ENCODE measurements at regions of chr20 and their contacts with region 1.

Region 1: DNA sequence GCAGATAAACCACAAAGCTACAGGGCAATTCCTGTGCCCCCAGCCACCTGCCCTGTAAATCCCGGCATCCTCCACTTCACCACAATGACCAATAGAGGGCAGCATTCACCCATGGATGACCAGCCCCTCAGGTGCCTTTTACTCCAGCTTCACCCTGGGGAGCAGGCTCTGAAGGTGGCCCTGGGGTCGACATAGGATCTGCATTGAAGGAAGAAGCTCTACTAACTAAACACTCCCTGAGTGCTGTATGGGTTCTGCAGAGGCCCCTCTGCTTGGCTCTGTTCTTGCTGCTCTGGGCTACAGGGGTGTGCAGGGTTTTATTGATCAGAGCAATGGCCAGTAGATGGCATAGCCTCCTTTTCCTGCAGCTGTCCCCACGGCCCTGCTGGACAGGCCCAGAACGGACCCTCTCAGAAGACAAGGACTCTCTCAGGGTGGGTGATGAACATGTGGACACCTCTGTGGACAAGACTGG is 20.3 kb downstream of the CST4 start:
- DNase-seq: peak; percentile 72
- ATAC-seq: peak; percentile 91
- H3K4me3 Mint-ChIP-seq: no peak overlapping the region
- H3K27ac Mint-ChIP-seq: no peak overlapping the region
- H3K4me1 Mint-ChIP-seq: no peaks in the 10 kb centered on the region
- H3K27me3 Mint-ChIP-seq: peaks cover 3% of the 10 kb centered on the region; the same call in 1 of the 2 replicates
- CTCF ChIP-seq: peak; percentile 85

Region 2: DNA sequence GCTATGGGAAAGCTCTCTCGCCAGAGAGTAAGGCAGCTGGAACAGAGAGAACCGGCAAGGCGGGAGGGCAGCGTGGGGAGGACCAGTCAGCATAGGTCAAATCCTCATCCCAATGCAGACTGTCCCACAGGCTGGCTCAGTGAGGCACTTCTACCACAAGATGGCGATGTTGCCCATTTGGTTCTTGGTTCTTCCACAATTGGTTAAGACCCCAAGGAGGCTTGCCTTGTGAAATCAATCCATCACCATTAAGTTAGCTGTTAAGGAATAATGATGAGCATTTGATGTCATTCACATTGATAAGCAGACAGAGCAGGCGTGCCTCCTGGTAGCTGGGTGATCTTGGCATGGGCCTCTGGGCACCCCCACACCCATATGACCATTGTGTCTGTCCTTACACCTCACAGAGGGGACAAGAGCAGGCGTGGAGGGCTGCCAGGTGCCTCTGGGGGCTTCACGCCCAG is 226.6 kb before region 1 on chr20:
- CTCF ChIA-PET with region 1: interaction called, 16 read pairs
- POLR2A ChIA-PET with region 1: no interaction called
- DNase-seq: peak; percentile 89
- ATAC-seq: peak; percentile 97
- H3K4me3 Mint-ChIP-seq: no peak overlapping the region
- H3K27ac Mint-ChIP-seq: no peak overlapping the region
- H3K4me1 Mint-ChIP-seq: 0 out of 2 replicates have a peak, but pooled peaks cover 7% of the 10 kb centered on the region
- H3K27me3 Mint-ChIP-seq: peaks cover 4% of the 10 kb centered on the region; the same call in 1 of the 2 replicates
- CTCF ChIP-seq: peak; percentile 80

Region 3: GRCh38 chr20:23596579-23597250 is 71.8 kb before region 1 on chr20:
- CTCF ChIA-PET with region 1: no interaction called
- POLR2A ChIA-PET with region 1: no interaction called
- DNase-seq: no peak
- ATAC-seq: no peak
- H3K4me3 Mint-ChIP-seq: no peak overlapping the region
- H3K27ac Mint-ChIP-seq: no peak overlapping the region
- H3K4me1 Mint-ChIP-seq: peaks cover 29% of the 10 kb centered on the region
- H3K27me3 Mint-ChIP-seq: no peaks in the 10 kb centered on the region; the same call in 1 of the 2 replicates
- CTCF ChIP-seq: no peak

Region 4: GRCh38 chr20:23622839-23623343 is 45.6 kb before region 1 on chr20:
- CTCF ChIA-PET with region 1: no interaction called
- POLR2A ChIA-PET with region 1: no interaction called
- DNase-seq: no peak
- ATAC-seq: 0 out of 2 replicates have a peak, but pooled peaks have one; percentile 47
- H3K4me3 Mint-ChIP-seq: no peak overlapping the region
- H3K27ac Mint-ChIP-seq: no peak overlapping the region
- H3K4me1 Mint-ChIP-seq: peaks cover 27% of the 10 kb centered on the region
- H3K27me3 Mint-ChIP-seq: peaks cover 7% of the 10 kb centered on the region
- CTCF ChIP-seq: no peak

Region 5: GRCh38 chr20:23655491-23656211 is 12.9 kb before region 1 on chr20:
- CTCF ChIA-PET with region 1: interaction called, 13 read pairs
- POLR2A ChIA-PET with region 1: no interaction called
- DNase-seq: no peak
- ATAC-seq: peak; percentile 30
- H3K4me3 Mint-ChIP-seq: no peak overlapping the region
- H3K27ac Mint-ChIP-seq: no peak overlapping the region
- H3K4me1 Mint-ChIP-seq: peaks cover 12% of the 10 kb centered on the region
- H3K27me3 Mint-ChIP-seq: peaks cover 4% of the 10 kb centered on the region; the same call in 1 of the 2 replicates
- CTCF ChIP-seq: no peak

Region 6: DNA sequence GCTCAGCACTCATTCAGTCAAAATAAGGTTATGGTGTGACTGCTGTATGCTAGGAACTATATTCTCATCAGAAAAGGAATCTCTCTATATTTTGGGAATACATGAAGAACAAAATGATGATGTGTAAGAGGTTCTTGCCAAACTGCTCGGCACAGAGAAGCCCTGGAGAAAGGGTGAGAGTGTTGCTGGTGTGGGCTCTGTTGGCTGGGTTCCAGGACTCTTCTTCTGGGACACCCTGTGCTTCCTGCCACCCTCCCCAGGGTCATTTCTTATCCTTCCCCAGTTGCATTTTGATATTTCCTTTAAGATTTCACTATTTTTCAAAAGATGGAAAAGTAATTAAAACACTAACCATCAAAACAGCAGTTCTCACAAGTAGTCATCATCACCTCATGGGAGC is 53.4 kb after region 1 on chr20:
- CTCF ChIA-PET with region 1: interaction called, 19 read pairs
- POLR2A ChIA-PET with region 1: no interaction called
- DNase-seq: no peak
- ATAC-seq: no peak
- H3K4me3 Mint-ChIP-seq: no peak overlapping the region
- H3K27ac Mint-ChIP-seq: no peak overlapping the region
- H3K4me1 Mint-ChIP-seq: peaks cover 8% of the 10 kb centered on the region
- H3K27me3 Mint-ChIP-seq: peaks cover 11% of the 10 kb centered on the region
- CTCF ChIP-seq: no peak

Region 7: DNA sequence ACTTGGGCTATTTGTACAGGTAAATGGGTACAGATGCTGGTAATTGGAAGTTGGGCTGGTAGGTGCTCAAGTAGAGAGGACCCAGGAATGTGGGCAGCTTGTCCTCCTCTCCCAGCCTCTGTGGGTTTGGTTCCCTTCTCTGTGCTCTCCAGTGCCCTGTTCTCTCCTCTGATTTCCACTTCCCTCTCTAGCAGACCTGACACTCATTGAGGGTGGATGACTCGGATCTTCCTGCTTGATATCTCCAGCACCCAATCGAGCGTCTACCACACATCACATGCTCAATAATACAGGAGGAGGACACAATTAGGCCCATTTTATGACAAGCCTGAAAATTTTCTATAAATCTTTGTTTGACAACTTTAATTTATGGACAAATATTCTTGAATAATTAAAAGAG is 58.5 kb after region 1 on chr20:
- CTCF ChIA-PET with region 1: interaction called, 19 read pairs
- POLR2A ChIA-PET with region 1: no interaction called
- DNase-seq: no peak
- ATAC-seq: no peak
- H3K4me3 Mint-ChIP-seq: no peak overlapping the region
- H3K27ac Mint-ChIP-seq: no peak overlapping the region
- H3K4me1 Mint-ChIP-seq: peaks cover 8% of the 10 kb centered on the region
- H3K27me3 Mint-ChIP-seq: peaks cover 22% of the 10 kb centered on the region
- CTCF ChIP-seq: no peak

Region 8: DNA sequence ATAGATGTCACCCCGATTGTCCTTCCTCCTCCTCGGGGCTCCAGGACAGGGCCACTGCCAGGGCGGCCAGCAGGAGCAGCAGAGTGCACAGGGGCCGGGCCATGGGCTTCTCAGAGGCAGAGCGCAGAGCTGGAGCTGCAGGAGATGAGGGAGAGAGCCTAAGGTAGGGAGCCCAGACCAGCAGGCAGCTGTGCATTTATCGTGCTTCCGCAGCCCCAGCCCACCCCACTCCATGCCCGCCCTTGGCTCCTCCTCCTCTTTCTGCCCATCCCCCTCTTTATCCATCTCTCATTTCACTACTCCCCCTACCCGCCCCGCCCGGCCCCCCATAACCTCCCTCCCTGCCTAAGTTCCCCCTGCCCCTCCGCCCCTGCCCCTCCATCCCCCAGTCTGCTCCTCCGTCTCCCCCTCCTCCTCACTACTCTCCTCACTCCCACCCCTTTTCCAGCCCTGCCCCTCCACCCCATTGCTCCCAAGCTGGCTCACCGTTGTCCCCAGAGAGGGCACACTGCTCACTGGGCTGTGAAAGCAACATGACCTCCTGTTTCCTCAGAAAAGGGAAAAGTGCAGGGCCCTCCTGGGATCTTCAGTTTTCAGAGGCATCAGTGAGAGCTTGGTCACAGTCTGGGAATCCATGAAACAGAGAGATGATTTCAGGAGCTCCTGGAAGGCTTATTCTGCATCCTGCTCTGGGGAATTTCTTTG is 107.7 kb after region 1 on chr20:
- CTCF ChIA-PET with region 1: interaction called, 19 read pairs
- POLR2A ChIA-PET with region 1: no interaction called
- DNase-seq: peak; percentile 54
- ATAC-seq: peak; percentile 93
- H3K4me3 Mint-ChIP-seq: no peak overlapping the region
- H3K27ac Mint-ChIP-seq: no peak overlapping the region
- H3K4me1 Mint-ChIP-seq: peaks cover 10% of the 10 kb centered on the region
- H3K27me3 Mint-ChIP-seq: peaks cover 45% of the 10 kb centered on the region
- CTCF ChIP-seq: no peak

Region 9: DNA sequence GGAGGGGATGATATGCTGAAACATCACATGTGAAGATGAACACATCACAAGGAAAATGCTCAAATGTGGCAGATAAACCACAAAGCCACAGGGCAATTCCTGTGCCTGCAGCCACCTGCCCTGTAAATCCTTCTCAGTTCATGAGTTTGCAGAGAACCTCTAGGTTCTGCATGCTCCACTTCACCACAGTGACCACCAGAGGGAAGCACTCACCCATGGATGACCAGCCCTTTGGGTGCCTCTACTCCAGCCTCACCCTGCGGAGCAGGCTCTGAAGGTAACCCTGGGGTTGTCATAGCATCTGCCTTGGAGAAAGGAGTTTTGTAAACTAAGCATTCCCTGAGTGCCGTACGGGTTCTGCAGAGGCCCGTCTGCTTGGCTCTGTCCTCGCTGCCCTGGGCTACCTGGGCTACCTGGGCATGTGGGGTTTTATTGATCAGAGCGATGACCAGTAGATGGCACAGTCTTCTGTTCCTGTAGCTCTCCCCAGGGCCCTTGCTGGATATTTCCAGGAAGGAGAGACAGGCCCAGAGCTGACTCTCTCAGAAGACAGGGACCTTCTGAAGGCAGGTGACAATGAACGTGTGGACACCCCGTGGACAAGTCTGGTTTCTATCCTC is 114.0 kb after region 1 on chr20:
- CTCF ChIA-PET with region 1: interaction called, 19 read pairs
- POLR2A ChIA-PET with region 1: no interaction called
- DNase-seq: no peak
- ATAC-seq: peak; percentile 98
- H3K4me3 Mint-ChIP-seq: no peak overlapping the region
- H3K27ac Mint-ChIP-seq: no peak overlapping the region
- H3K4me1 Mint-ChIP-seq: no peaks in the 10 kb centered on the region
- H3K27me3 Mint-ChIP-seq: peaks cover 2% of the 10 kb centered on the region; the same call in 1 of the 2 replicates
- CTCF ChIP-seq: peak; percentile 41; the same call in 1 of the 2 replicates

Region 10: DNA sequence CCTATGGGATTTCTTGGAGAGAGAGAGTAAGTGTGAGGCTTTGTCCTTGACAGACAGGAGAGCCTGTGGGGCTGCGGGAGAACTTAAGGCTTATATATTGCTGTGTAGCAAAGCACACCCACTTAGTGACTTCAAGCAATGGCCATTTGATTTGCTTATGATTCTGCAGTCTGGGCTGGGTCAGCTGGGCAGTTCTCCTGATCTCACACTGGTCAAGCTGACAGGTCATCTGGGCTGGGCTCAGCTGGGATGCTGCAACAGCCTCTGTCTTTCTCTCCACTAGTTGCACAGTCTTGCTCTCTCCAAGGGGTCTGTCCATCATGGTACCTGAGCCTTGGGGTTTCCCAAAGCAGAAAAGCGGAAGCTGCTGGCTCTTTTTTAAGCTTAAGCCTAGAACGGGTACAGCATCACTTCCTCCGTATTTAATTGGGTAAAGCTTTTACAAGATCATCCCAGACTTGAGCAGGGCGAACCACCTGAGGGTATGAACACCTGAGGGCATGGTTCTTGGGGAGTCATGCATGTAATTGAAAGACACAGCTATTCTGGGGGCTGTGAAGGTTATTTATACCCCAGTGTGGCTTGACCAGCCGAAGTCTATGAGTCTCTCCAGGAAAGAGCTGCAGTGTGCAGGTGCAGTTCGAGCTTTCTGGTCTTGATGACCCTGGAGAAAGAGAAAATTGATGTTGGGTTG is 333.3 kb after region 1 on chr20:
- CTCF ChIA-PET with region 1: no interaction called
- POLR2A ChIA-PET with region 1: no interaction called
- DNase-seq: no peak
- ATAC-seq: no peak
- H3K4me3 Mint-ChIP-seq: no peak overlapping the region
- H3K27ac Mint-ChIP-seq: no peak overlapping the region
- H3K4me1 Mint-ChIP-seq: peaks cover 21% of the 10 kb centered on the region
- H3K27me3 Mint-ChIP-seq: no peaks in the 10 kb centered on the region
- CTCF ChIP-seq: no peak

Measured in WTC11 (cell line).